Calu3 (cell line): ENCODE measurements at regions of chr5 and their contacts with region 1.

Region 1: GRCh38 chr5:32916648-32917047 is 205.5 kb downstream of the NPR3 start:
- DNase-seq: peak; percentile 50
- H3K4me3 Mint-ChIP-seq: no peak overlapping the region
- H3K27ac Mint-ChIP-seq: no peak overlapping the region
- H3K4me1 Mint-ChIP-seq: no peaks in the 10 kb centered on the region
- H3K27me3 Mint-ChIP-seq: peaks cover 25% of the 10 kb centered on the region
- CTCF ChIP-seq: peak; percentile 54

Region 2: DNA sequence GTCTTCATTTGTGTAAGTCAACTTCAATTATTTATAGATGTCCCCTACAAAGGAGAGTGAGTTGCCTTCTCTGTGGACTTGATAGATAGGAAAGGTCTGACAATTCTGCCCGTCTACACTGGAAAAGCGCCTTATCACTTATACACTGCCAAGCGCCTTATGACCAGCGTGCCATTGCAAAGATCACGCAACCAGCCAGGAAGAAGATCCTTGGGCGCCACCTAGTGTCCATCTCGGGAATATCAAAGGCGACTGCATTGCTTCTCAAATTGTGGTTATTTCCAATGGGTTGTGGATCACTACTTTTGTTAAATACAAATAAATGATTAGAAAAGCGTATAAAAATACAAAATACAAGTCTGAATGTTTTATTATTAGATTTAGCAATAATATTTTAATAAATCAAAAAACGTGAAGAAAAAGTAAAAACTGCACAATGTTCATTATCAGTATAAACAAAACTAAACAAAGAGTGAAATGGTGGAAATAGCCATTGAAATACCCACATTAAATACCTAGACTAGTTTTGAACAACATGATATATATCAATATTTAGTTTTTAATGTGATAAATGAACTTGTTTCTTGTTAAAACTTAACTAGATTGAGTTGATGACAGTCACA is 303.5 kb before region 1 on chr5:
- CTCF ChIA-PET with region 1: no interaction called
- intact Hi-C with region 1: loop called (anchors 5 kb)
- DNase-seq: peak; percentile 88
- H3K4me3 Mint-ChIP-seq: no peak overlapping the region
- H3K27ac Mint-ChIP-seq: no peak overlapping the region
- H3K4me1 Mint-ChIP-seq: peaks cover 11% of the 10 kb centered on the region
- H3K27me3 Mint-ChIP-seq: no peaks in the 10 kb centered on the region
- CTCF ChIP-seq: peak; percentile 81

Region 3: DNA sequence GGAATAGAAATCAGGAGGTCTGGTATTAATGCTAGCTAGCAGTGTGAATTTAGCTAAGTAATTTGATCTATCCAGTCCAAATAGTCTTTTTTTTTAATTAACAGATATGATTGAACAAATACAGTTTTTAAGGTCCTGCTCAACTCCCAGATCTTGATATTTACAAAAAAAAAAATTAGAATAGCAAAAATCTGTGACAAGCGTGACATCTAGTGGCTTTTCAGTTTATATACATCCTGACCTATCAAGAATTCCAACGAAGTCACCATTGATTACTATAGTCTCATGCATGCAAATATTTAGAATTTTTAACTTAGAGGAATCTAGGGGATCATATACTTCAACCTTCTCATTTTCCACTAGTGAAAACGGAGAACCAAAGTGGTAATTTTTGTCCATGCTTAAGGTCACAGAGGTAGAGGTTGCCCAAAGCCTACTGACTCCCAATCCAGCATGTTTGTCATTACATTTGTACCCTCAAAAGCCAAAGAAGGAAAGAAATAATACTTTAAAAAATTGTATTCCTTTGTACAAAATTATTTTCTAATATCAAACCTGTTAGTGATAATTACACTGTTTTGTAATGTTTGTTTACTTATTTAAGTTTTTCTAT is 506.5 kb after region 1 on chr5:
- CTCF ChIA-PET with region 1: no interaction called
- intact Hi-C with region 1: loop called (anchors 5 kb)
- DNase-seq: no peak
- H3K4me3 Mint-ChIP-seq: no peak overlapping the region
- H3K27ac Mint-ChIP-seq: no peak overlapping the region
- H3K4me1 Mint-ChIP-seq: no peaks in the 10 kb centered on the region
- H3K27me3 Mint-ChIP-seq: peaks cover 15% of the 10 kb centered on the region
- CTCF ChIP-seq: peak; percentile 17